ENCODE measurements at regions of chr17 and their contacts with region 1.

Region 1: DNA sequence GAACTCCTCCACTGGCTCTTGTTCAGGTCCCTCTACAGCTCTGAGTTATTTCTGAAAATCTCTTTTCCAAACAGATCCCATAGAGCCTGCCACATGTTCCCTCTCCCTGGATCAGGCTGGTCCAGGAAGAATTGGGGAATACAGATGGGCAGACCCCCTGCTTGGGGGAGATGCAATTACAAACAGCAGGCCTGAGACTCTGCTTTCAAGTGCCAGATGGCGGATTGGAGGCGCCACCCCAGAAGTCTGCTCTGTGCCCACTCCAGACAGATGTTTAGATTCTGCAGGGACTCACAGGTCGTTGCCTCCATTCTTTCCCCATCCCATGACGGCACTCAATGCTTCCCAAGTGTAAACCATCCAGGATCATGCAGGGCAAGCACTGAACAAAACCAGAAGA is 316.6 kb downstream of the SLC39A11 start:
- DNase-seq: no peak
- ATAC-seq: no peak
- H3K4me3 ChIP-seq: no peak overlapping the region
- H3K27ac ChIP-seq: no peak overlapping the region
- H3K4me1 ChIP-seq: no peaks in the 10 kb centered on the region
- H3K27me3 ChIP-seq: no peaks in the 10 kb centered on the region
- CTCF ChIP-seq: no peak
- POLR2A ChIP-seq: no peak
- RAD21 ChIP-seq: no peak

Region 2: DNA sequence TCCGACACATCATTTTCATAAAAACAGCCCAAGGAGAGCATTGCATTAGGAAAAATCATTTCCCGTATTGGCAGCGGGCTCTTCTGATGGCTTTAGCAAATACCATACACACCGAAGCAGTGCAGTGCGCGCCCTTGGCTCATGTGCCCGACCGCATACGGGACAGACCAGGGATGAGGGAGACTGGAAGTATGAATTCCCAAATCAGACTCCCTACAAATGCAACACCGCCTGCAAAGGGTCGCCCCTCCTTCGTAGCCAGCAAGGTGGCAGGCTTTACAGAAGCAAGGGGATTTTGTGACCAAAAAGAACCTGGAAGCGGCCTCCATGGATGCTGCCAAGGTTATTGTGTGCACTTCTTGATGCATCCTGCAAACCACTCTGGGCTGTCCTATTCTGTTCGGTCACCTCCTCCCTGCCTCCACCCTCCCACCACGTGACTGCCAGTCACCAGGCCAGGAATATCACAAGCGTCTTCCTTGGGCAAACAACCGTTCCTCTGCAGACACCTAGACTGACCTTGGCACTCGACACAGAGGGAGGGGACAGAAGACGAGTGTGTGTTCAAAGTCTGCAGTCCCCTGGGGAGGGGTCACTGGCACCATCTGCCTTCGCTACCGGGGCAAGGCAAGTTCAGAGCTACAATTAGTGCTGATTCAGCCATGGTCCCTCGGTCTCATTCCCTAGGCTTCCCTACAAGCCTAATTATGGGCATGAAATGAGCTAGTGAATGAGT is 143.8 kb before region 1 on chr17:
- CTCF ChIA-PET with region 1: no interaction called
- POLR2A ChIA-PET with region 1: no interaction called
- dilution Hi-C with region 1: no loop called
- in situ Hi-C with region 1: no loop called
- intact Hi-C with region 1: no loop called
- DNase-seq: no peak
- ATAC-seq: no peak
- H3K4me3 ChIP-seq: no peak overlapping the region
- H3K27ac ChIP-seq: no peak overlapping the region
- H3K4me1 ChIP-seq: no peaks in the 10 kb centered on the region
- H3K27me3 ChIP-seq: peaks cover 17% of the 10 kb centered on the region
- CTCF ChIP-seq: no peak
- POLR2A ChIP-seq: no peak
- RAD21 ChIP-seq: no peak

Region 3: GRCh38 chr17:72839131-72839725 is 63.3 kb after region 1 on chr17:
- CTCF ChIA-PET with region 1: no interaction called
- POLR2A ChIA-PET with region 1: no interaction called
- dilution Hi-C with region 1: no loop called
- in situ Hi-C with region 1: no loop called
- intact Hi-C with region 1: loop called (anchors 10 kb)
- DNase-seq: no peak
- ATAC-seq: no peak
- H3K4me3 ChIP-seq: no peak overlapping the region
- H3K27ac ChIP-seq: no peak overlapping the region
- H3K4me1 ChIP-seq: no peaks in the 10 kb centered on the region
- H3K27me3 ChIP-seq: no peaks in the 10 kb centered on the region
- CTCF ChIP-seq: no peak
- POLR2A ChIP-seq: no peak
- RAD21 ChIP-seq: no peak